Ascending aorta (tissue), 2 donors: ENCODE measurements at regions of chr16 and their contacts with region 1.

Region 1: DNA sequence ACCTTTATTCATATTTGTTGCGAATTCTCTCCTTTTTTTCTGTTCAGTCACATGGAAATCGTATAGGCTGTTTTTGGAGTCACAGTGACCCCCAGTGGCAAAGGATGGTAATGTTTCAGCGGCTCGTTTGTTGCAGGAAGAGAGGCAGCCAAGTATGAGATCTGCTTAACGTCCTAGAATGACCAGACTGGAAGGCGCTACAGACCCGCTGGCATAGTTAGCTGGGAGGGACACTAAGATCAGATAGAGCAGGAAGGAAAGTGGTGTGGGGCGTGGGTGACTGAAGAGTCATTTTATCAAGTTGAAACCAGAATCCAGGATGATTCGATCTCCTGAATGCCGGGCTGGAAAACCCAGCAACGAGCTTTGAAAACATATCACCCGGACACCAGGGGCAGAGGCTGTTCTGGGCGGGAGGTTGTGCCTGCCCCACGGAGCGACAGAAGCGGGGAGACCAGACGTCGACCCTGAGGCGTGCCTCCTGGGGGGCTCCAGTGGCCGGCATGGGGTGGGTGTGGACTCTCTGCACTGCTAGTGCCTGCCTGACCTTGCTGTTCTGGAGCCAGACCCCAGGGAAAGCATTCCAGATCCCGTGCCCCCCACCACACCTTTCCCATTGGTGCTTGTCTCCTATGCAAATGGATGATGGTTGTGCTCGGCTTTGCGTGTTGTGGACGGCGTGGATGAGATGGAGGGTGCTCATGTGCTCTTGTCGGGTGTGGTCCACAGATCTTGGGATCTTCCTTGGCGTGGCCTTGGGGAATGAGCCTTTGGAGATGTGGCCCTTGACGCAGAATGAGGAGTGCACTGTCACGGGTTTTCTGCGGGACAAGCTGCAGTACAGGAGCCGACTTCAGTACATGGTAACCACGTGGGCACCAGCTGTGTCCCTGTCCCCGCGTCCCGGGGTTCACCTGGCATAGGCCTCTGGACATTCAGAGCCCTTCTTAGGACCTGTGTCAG is 7.7 kb downstream of the IL34 start:
- DNase-seq: peak in 1 of 2 donors; percentile 93
- H3K4me3 ChIP-seq: peak overlapping the region in 1 of 2 donors; percentile 40
- H3K27ac ChIP-seq: peak overlapping the region; percentile 12 to 41
- H3K4me1 ChIP-seq: peaks cover 0 to 4% of the 10 kb centered on the region in 2 donors
- H3K27me3 ChIP-seq: no peaks in the 10 kb centered on the region
- CTCF ChIP-seq: peak; percentile 80 to 94 (median 92)

Region 2: GRCh38 chr16:70529051-70529777 is 124.9 kb before region 1 on chr16:
- intact Hi-C with region 1: loop called (anchors 1 kb)
- DNase-seq: no peak
- H3K4me3 ChIP-seq: no peak overlapping the region
- H3K27ac ChIP-seq: no peak overlapping the region
- H3K4me1 ChIP-seq: peaks cover 8 to 24% of the 10 kb centered on the region in 2 donors
- H3K27me3 ChIP-seq: no peaks in the 10 kb centered on the region
- CTCF ChIP-seq: peak; percentile 37 to 52 (median 51)

Region 3: GRCh38 chr16:70576431-70577255 is 77.4 kb before region 1 on chr16:
- intact Hi-C with region 1: no loop called
- DNase-seq: peak in 1 of 2 donors; percentile 46
- H3K4me3 ChIP-seq: no peak overlapping the region
- H3K27ac ChIP-seq: peak overlapping the region; percentile 77 to 79
- H3K4me1 ChIP-seq: peaks cover 15 to 60% of the 10 kb centered on the region in 2 donors
- H3K27me3 ChIP-seq: no peaks in the 10 kb centered on the region
- CTCF ChIP-seq: no peak